ENCODE measurements at regions of chr5 and their contacts with region 1.

Region 1: GRCh38 chr5:74766849-74767578 is at the starts of genes GFM2 and NSA2:
- DNase-seq: peak; percentile 92 to 93
- H3K4me3 ChIP-seq: peak within 1 kb of the TSS; percentile 75
- H3K4me3 Mint-ChIP-seq: peak within 1 kb of the TSS; percentile 86
- H3K27ac Mint-ChIP-seq: peak within 1 kb of the TSS; percentile 97
- H3K4me1 ChIP-seq: peaks cover 30% of the 10 kb centered on the region
- H3K4me1 Mint-ChIP-seq: peaks cover 14% of the 10 kb centered on the region
- H3K27me3 ChIP-seq: no peaks in the 10 kb centered on the region
- H3K27me3 Mint-ChIP-seq: no peaks in the 10 kb centered on the region
- CTCF ChIP-seq: no peak
- total RNA-seq, gene GFM2: 43.6 and 46.5 TPM in 2 replicates
- total RNA-seq, gene NSA2: 190 and 202 TPM in 2 replicates

Region 2: GRCh38 chr5:74778609-74779008 is 11.6 kb after region 1 on chr5:
- CTCF ChIA-PET with region 1: no interaction called
- POLR2A ChIA-PET with region 1: interaction called, 12 read pairs
- intact Hi-C with region 1: no loop called
- DNase-seq: no peak
- H3K4me3 ChIP-seq: no peak overlapping the region
- H3K4me3 Mint-ChIP-seq: no peak overlapping the region
- H3K27ac Mint-ChIP-seq: no peak overlapping the region
- H3K4me1 ChIP-seq: no peaks in the 10 kb centered on the region
- H3K4me1 Mint-ChIP-seq: no peaks in the 10 kb centered on the region
- H3K27me3 ChIP-seq: no peaks in the 10 kb centered on the region
- H3K27me3 Mint-ChIP-seq: no peaks in the 10 kb centered on the region
- CTCF ChIP-seq: no peak

Region 3: GRCh38 chr5:74864823-74865222 is 97.8 kb after region 1 on chr5:
- CTCF ChIA-PET with region 1: no interaction called
- POLR2A ChIA-PET with region 1: no interaction called
- intact Hi-C with region 1: loop called (anchors 1 kb)
- DNase-seq: peak in 1 of 2 experiments; percentile 27
- H3K4me3 ChIP-seq: peak overlapping the region; percentile 97
- H3K4me3 Mint-ChIP-seq: peak overlapping the region; percentile 92
- H3K27ac Mint-ChIP-seq: peak overlapping the region; percentile 94
- H3K4me1 ChIP-seq: peaks cover 16% of the 10 kb centered on the region
- H3K4me1 Mint-ChIP-seq: no peaks in the 10 kb centered on the region
- H3K27me3 ChIP-seq: no peaks in the 10 kb centered on the region
- H3K27me3 Mint-ChIP-seq: no peaks in the 10 kb centered on the region
- CTCF ChIP-seq: no peak